Tibial artery (tissue), 4 donors: ENCODE measurements at regions of chr17 and their contacts with region 1.

Region 1: GRCh38 chr17:59329638-59330313 is 1.7 kb upstream of the YPEL2 start:
- DNase-seq: peak; percentile 69 to 78
- H3K4me3 ChIP-seq: peak overlapping the region in 1 of 2 donors; percentile 89
- H3K27ac ChIP-seq: peak overlapping the region; percentile 99
- H3K4me1 ChIP-seq: peaks cover 0 to 59% (median 43%) of the 10 kb centered on the region in 4 donors
- H3K27me3 ChIP-seq: no peaks in the 10 kb centered on the region
- CTCF ChIP-seq: peak; percentile 78 to 87

Region 2: GRCh38 chr17:59287452-59287851 is 42.3 kb before region 1 on chr17:
- intact Hi-C with region 1: no loop called
- DNase-seq: no peak
- H3K4me3 ChIP-seq: no peak overlapping the region
- H3K27ac ChIP-seq: no peak overlapping the region
- H3K4me1 ChIP-seq: no peaks in the 10 kb centered on the region
- H3K27me3 ChIP-seq: no peaks in the 10 kb centered on the region
- CTCF ChIP-seq: no peak

Region 3: DNA sequence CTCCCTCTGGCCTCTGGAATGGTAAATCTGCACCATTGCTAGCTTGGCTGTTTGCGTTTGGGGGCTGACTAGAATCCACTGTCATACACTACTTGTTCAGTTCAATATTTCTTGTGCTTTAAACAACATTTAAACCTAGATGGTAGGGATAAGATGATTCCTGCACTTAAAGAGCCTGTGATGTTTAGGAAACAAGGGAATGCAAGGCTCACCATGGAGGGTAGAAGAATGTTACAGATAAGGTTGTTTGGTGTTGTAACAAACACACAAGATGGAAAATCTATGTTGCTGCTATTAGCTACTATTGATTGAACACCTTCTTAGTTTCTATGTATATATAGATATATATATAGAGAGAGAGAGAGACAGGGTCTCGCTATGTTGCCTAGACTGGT is 33.0 kb after region 1 on chr17:
- intact Hi-C with region 1: loop called (anchors 1 kb)
- DNase-seq: no peak
- H3K4me3 ChIP-seq: peak overlapping the region in 1 of 2 donors; percentile 9
- H3K27ac ChIP-seq: peak overlapping the region; percentile 65 to 89
- H3K4me1 ChIP-seq: peaks cover 7 to 100% (median 91%) of the 10 kb centered on the region in 4 donors
- H3K27me3 ChIP-seq: no peaks in the 10 kb centered on the region
- CTCF ChIP-seq: no peak

Region 4: GRCh38 chr17:59440784-59441441 is 111.1 kb after region 1 on chr17:
- intact Hi-C with region 1: loop called (anchors 2 kb)
- DNase-seq: peak; percentile 96 to 97
- H3K4me3 ChIP-seq: peak overlapping the region in 1 of 2 donors; percentile 16
- H3K27ac ChIP-seq: peak overlapping the region; percentile 75 to 81
- H3K4me1 ChIP-seq: peaks cover 0 to 43% (median 25%) of the 10 kb centered on the region in 4 donors
- H3K27me3 ChIP-seq: no peaks in the 10 kb centered on the region
- CTCF ChIP-seq: peak; percentile 83 to 95

Region 5: GRCh38 chr17:59617156-59617740 is 287.5 kb after region 1 on chr17:
- intact Hi-C with region 1: no loop called
- DNase-seq: no peak
- H3K4me3 ChIP-seq: no peak overlapping the region
- H3K27ac ChIP-seq: no peak overlapping the region
- H3K4me1 ChIP-seq: peaks cover 0 to 21% (median 14%) of the 10 kb centered on the region in 4 donors
- H3K27me3 ChIP-seq: no peaks in the 10 kb centered on the region
- CTCF ChIP-seq: no peak